Activated CD4-positive, alpha-beta T cell treated with anti-CD3 and anti-CD28 coated beads, Interleukin-2, amount 10 ng/mL, durations not matched to agents 24 days and 14 days (primary cell): ENCODE measurements at regions of chr20 and their contacts with region 1.

Region 1: GRCh38 chr20:35146920-35147574 is at the start of gene EDEM2:
- DNase-seq: peak; percentile 98
- H3K4me3 Mint-ChIP-seq: peak within 1 kb of the TSS; percentile 91
- H3K27ac Mint-ChIP-seq: peak within 1 kb of the TSS; percentile 89
- H3K4me1 Mint-ChIP-seq: peaks cover 25% of the 10 kb centered on the region
- H3K27me3 Mint-ChIP-seq: peaks cover 3% of the 10 kb centered on the region
- total RNA-seq, gene EDEM2: 19.2 and 21.1 TPM in 2 replicates

Region 2: GRCh38 chr20:34825530-34826362 is 321.3 kb before region 1 on chr20 and contains the start of gene NCOA6:
- intact Hi-C with region 1: loop called (anchors 1 kb)
- DNase-seq: peak; percentile 92
- H3K4me3 Mint-ChIP-seq: peak within 1 kb of the TSS; percentile 95
- H3K27ac Mint-ChIP-seq: peak within 1 kb of the TSS; percentile 93
- H3K4me1 Mint-ChIP-seq: peaks cover 28% of the 10 kb centered on the region
- H3K27me3 Mint-ChIP-seq: peaks cover 11% of the 10 kb centered on the region
- total RNA-seq, gene NCOA6: 25.1 and 26.8 TPM in 2 replicates

Region 3: GRCh38 chr20:35104685-35105295 is 42.3 kb before region 1 on chr20:
- intact Hi-C with region 1: no loop called
- DNase-seq: no peak
- H3K4me3 Mint-ChIP-seq: no peak overlapping the region
- H3K27ac Mint-ChIP-seq: no peak overlapping the region
- H3K4me1 Mint-ChIP-seq: no peaks in the 10 kb centered on the region
- H3K27me3 Mint-ChIP-seq: peaks cover 16% of the 10 kb centered on the region

Region 4: GRCh38 chr20:35207950-35208611 is 61.0 kb after region 1 on chr20:
- intact Hi-C with region 1: loop called (anchors 1 kb)
- DNase-seq: peak; percentile 93
- H3K4me3 Mint-ChIP-seq: no peak overlapping the region
- H3K27ac Mint-ChIP-seq: no peak overlapping the region
- H3K4me1 Mint-ChIP-seq: no peaks in the 10 kb centered on the region
- H3K27me3 Mint-ChIP-seq: no peaks in the 10 kb centered on the region

Region 5: GRCh38 chr20:35284267-35284991 is 137.4 kb after region 1 on chr20 and contains the start of gene EIF6:
- intact Hi-C with region 1: loop called (anchors 1 kb)
- DNase-seq: peak; percentile 94
- H3K4me3 Mint-ChIP-seq: peak within 1 kb of the TSS; percentile 90
- H3K27ac Mint-ChIP-seq: peak within 1 kb of the TSS; percentile 95
- H3K4me1 Mint-ChIP-seq: peaks cover 27% of the 10 kb centered on the region
- H3K27me3 Mint-ChIP-seq: no peaks in the 10 kb centered on the region
- total RNA-seq, gene EIF6: 211 and 216 TPM in 2 replicates

Region 6: GRCh38 chr20:35410613-35411012 is 263.6 kb after region 1 on chr20:
- intact Hi-C with region 1: loop called (anchors 10 kb)
- DNase-seq: no peak
- H3K4me3 Mint-ChIP-seq: peak overlapping the region; percentile 94
- H3K27ac Mint-ChIP-seq: peak overlapping the region; percentile 93
- H3K4me1 Mint-ChIP-seq: peaks cover 13% of the 10 kb centered on the region
- H3K27me3 Mint-ChIP-seq: no peaks in the 10 kb centered on the region